ENCODE measurements at regions of chr16 and their contacts with region 1.

Region 1: DNA sequence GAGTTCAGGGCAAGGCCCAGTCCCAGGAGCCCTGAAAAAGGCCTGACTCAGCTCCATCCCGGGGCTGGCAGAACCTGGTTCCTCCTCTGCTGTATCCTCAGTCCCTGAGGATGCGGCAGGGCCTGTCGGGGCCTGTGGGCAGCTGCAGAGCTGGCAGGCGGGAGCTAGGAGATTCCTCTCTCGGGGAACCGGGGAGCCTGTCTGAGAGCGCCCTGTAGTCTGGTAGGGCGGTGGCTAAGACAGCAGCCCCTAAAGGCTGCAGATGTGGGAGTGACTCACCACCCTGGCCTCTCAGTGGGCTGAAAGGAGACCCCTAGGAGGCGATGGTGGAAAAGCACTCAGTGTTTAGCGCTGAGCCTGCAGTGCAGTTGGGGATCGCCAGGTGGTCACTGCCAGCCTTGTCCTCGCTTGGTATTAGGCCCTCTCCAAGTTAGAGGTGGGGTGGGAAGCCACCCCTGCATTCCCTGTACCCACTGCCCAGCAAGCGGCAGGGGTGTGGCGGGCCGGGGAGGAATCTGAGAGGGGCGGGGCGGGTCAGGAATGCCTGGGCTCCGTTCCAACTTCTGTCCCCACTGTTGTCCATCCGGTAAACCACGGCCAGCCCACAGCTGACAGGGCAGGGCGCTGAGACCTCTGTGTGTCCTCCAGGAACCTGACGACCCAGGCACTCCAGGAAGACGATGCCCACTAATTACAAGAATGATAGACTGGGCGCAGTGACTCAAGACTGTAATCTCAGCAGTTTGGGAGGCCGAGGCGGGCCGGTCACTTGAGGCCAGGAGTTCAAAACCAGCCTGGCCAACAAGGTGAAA is 29.5 kb upstream of the CDH1 start:
- DNase-seq: no peak
- ATAC-seq: peak in 1 of 4 donors; percentile 5
- H3K4me3 ChIP-seq: no peak overlapping the region
- H3K27ac ChIP-seq: no peak overlapping the region
- H3K4me1 ChIP-seq: no peaks in the 10 kb centered on the region
- H3K27me3 ChIP-seq: no peaks in the 10 kb centered on the region
- CTCF ChIP-seq: no peak
- POLR2A ChIP-seq: no peak

Region 2: GRCh38 chr16:68800257-68800875 is 92.8 kb after region 1 on chr16:
- intact Hi-C with region 1: loop called in 1 of 2 experiments (anchors 5 kb)
- DNase-seq: peak in 1 of 3 donors; percentile 55
- ATAC-seq: peak; percentile 80 to 90 (median 87)
- H3K4me3 ChIP-seq: no peak overlapping the region
- H3K27ac ChIP-seq: no peak overlapping the region
- H3K4me1 ChIP-seq: peaks cover 0 to 1% (median 0%) of the 10 kb centered on the region in 4 donors
- H3K27me3 ChIP-seq: no peaks in the 10 kb centered on the region
- CTCF ChIP-seq: peak; percentile 43 to 76 (median 74)
- POLR2A ChIP-seq: no peak